ENCODE measurements at regions of chr2 and their contacts with region 1.

Region 1: GRCh38 chr2:212892193-212892592 is 259.2 kb downstream of the IKZF2 start:
- DNase-seq: no peak
- H3K4me3 ChIP-seq: no peak overlapping the region
- H3K27ac ChIP-seq: no peak overlapping the region
- H3K4me1 ChIP-seq: peaks cover 4% of the 10 kb centered on the region
- H3K27me3 ChIP-seq: no peaks in the 10 kb centered on the region
- CTCF ChIP-seq: peak; percentile 49

Region 2: DNA sequence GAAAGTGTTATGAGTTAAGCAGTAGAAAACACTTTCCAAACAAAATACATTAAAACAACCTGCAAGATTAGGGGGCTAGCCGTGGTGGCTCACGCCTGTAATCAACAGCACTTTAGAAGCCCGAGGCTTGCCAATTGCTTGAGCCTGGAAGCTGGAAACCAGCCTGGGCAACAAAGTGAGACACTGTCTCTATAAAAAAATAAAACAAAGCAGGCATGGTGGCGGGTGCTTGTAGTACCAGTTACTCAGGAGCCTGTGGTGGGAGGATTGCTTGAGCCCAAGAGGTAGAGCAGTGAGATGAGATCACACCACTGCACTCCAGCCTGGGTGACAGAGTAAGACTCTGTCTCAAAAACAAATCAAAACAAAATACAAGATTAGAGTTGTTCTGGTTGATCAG is 561.9 kb before region 1 on chr2:
- intact Hi-C with region 1: no loop called
- DNase-seq: peak; percentile 16
- H3K4me3 ChIP-seq: no peak overlapping the region
- H3K27ac ChIP-seq: no peak overlapping the region
- H3K4me1 ChIP-seq: peaks cover 9% of the 10 kb centered on the region
- H3K27me3 ChIP-seq: no peaks in the 10 kb centered on the region
- CTCF ChIP-seq: no peak

Region 3: GRCh38 chr2:212686285-212686895 is 205.8 kb before region 1 on chr2:
- intact Hi-C with region 1: loop called (anchors 5 kb)
- DNase-seq: peak; percentile 33
- H3K4me3 ChIP-seq: no peak overlapping the region
- H3K27ac ChIP-seq: no peak overlapping the region
- H3K4me1 ChIP-seq: no peaks in the 10 kb centered on the region
- H3K27me3 ChIP-seq: peaks cover 2% of the 10 kb centered on the region
- CTCF ChIP-seq: peak; percentile 88

Region 4: GRCh38 chr2:212711856-212712255 is 180.3 kb before region 1 on chr2:
- intact Hi-C with region 1: no loop called
- DNase-seq: no peak
- H3K4me3 ChIP-seq: no peak overlapping the region
- H3K27ac ChIP-seq: no peak overlapping the region
- H3K4me1 ChIP-seq: no peaks in the 10 kb centered on the region
- H3K27me3 ChIP-seq: no peaks in the 10 kb centered on the region
- CTCF ChIP-seq: no peak

Region 5: DNA sequence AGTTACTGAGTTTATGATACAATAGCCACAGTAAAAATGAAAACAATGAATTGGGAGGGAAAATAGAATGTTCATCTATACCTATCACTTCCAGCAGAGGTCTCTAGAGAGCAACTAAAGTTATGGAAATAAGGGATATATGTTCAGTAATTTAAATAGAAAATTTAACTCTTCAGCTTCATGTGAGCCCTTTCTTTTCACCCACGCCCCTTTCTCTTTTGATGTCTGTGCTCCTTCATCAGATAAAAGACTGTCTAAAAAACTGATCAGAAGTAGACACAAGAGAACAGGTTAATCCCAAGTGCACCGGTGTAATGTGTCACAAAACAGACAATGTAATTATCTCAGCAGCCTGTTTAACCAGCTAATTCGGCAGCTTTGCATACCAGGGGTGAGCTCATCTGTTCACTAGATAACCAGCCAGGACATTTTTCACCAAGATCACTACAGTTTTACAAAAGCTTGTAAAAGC is 115.1 kb before region 1 on chr2:
- intact Hi-C with region 1: loop called (anchors 10 kb)
- DNase-seq: no peak
- H3K4me3 ChIP-seq: no peak overlapping the region
- H3K27ac ChIP-seq: no peak overlapping the region
- H3K4me1 ChIP-seq: no peaks in the 10 kb centered on the region
- H3K27me3 ChIP-seq: no peaks in the 10 kb centered on the region
- CTCF ChIP-seq: peak; percentile 75

Measured in left ventricle myocardium inferior (tissue), 1 donor.